Heart left ventricle (tissue), 16 donors: ENCODE measurements at regions of chr2 and their contacts with region 1.

Region 1: DNA sequence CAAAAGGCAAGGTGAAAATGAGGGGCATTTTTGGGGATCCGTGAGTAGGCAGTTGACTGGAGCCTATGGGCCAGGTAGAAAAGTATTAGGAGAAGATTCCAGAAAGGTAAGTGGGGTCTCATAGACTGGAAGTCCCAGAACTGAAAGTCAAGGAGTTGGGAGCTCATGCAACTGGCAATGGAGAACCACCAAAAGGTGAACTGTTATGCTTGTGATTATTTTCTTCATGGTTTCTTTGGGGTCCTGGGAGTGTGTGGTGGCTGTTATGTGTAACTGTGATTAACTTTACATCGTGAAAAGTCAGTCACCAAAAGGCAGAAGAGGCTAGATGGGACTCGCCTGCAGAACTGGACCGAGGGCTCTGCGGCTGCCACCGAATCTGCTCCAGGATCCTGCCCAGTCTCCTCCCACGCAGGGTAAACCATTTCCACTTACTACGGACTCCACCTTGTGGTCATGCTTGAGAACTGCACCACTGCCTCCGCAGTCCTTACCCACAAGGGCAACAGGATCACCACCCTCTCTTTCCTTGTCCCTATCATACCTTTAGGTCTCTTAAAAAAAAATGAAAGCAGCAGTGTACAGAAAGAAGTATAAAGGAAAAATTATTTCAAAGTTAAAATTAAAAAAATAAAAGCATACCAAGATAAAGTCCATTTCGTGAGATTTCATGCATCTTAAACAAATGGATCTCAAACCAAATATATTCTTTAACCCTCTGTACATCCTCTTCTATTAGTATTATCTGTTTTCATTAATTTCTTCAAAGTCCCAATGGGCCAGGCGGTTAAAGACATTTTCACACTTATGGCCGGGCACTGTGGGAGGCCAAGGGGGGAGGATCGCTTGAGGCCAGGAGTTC is 15.6 kb upstream of the CEP68 start:
- DNase-seq: peak; percentile 84 to 88 (median 87)
- ATAC-seq: peak; percentile 71 to 97 (median 96)
- H3K4me3 ChIP-seq: peak overlapping the region in 8 of 12 donors; percentile 4 to 34 (median 18)
- H3K27ac ChIP-seq: no peak overlapping the region
- H3K4me1 ChIP-seq: peaks cover 0 to 17% (median 4%) of the 10 kb centered on the region in 12 donors
- H3K27me3 ChIP-seq: no peaks in the 10 kb centered on the region
- CTCF ChIP-seq: peak; percentile 93 to 99 (median 96)
- POLR2A ChIP-seq: no peak

Region 2: DNA sequence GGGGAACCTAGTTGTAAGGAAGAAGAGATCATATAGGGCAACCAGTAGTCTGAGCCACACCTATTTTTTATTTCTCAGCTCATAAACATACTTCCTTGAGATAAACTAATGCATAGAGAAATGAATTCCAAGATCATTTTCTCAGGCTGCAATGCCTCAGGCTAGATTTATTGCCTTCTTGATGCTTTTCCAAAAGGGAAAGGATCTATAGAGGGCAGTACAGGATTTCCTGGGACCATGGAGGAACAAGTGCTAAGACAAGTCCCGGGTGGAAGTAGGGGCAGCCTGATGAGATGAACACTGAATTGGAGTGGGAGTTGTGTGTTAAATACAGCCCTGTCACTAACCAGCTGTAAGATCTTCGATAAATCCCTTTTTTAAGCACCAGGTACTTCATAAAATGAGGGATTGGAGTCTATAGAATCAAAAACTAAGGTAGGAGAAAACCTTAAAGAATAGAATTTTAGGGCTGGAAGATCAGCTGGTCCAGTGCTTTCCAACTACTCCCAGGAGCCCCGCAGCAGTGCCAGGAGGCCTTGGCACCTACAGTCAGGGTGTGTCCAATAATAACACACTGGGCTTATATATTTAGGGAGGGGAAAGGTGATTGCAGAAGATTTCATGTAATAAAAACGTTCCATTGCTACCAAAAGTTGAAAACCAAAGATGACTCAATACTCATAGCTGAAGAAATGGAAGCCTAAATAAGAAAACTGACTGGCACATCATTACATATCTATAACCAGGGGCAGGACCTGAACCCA is 445.1 kb before region 1 on chr2:
- intact Hi-C with region 1: loop called in 1 of 10 experiments (anchors 10 kb)
- DNase-seq: no peak
- ATAC-seq: peak in 1 of 4 donors; percentile 44
- H3K4me3 ChIP-seq: no peak overlapping the region
- H3K27ac ChIP-seq: no peak overlapping the region
- H3K4me1 ChIP-seq: peaks cover 0 to 25% (median 5%) of the 10 kb centered on the region in 12 donors
- H3K27me3 ChIP-seq: no peaks in the 10 kb centered on the region
- CTCF ChIP-seq: peak in 7 of 12 donors; percentile 8 to 45 (median 33)
- POLR2A ChIP-seq: no peak

Region 3: GRCh38 chr2:64978514-64979268 is 61.9 kb before region 1 on chr2:
- intact Hi-C with region 1: loop called in 2 of 10 experiments (anchors 5 to 10 kb)
- DNase-seq: no peak
- ATAC-seq: peak in 1 of 4 donors; percentile 41
- H3K4me3 ChIP-seq: no peak overlapping the region
- H3K27ac ChIP-seq: peak overlapping the region in 1 of 12 donors; percentile 0
- H3K4me1 ChIP-seq: peaks cover 0 to 35% (median 6%) of the 10 kb centered on the region in 12 donors
- H3K27me3 ChIP-seq: no peaks in the 10 kb centered on the region
- CTCF ChIP-seq: peak in 9 of 12 donors; percentile 12 to 44 (median 20)
- POLR2A ChIP-seq: no peak

Region 4: GRCh38 chr2:64988420-64989125 is 52.1 kb before region 1 on chr2:
- intact Hi-C with region 1: loop called in 6 of 10 experiments (anchors 2 to 10 kb)
- DNase-seq: peak in 4 of 5 donors; percentile 62 to 79 (median 73)
- ATAC-seq: peak; percentile 43 to 80 (median 78)
- H3K4me3 ChIP-seq: peak overlapping the region; percentile 71 to 97 (median 84)
- H3K27ac ChIP-seq: peak overlapping the region; percentile 87 to 99 (median 96)
- H3K4me1 ChIP-seq: peaks cover 0 to 45% (median 24%) of the 10 kb centered on the region in 12 donors
- H3K27me3 ChIP-seq: no peaks in the 10 kb centered on the region
- CTCF ChIP-seq: peak in 10 of 12 donors; percentile 36 to 70 (median 47)
- POLR2A ChIP-seq: peak in 1 of 2 donors; percentile 79

Region 5: DNA sequence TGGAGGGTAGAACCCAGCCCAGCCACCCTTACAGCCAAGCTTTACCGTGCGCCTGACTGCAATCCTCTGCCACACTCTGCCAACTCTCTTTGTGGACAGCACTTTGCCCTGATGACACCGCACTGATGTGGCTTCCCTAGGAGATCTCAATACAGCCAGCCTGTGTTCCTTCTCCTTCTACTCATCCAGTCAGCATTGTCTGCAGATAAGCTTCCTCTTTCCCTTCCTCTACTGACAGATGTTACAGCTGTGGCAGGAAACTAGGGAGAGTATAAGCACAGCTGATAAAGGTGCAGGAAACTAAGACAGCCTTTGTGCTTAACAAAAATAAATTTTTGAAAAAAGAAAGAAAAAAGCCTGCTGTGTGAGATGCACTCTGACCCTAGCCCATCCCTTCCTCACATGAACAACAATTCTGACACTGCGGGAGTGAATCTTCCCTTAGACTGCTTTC is 40.6 kb after region 1 on chr2:
- intact Hi-C with region 1: no loop called
- DNase-seq: peak in 1 of 5 donors; percentile 44
- ATAC-seq: peak; percentile 34 to 77 (median 64)
- H3K4me3 ChIP-seq: no peak overlapping the region
- H3K27ac ChIP-seq: peak overlapping the region in 7 of 12 donors; percentile 14 to 72 (median 36)
- H3K4me1 ChIP-seq: peaks cover 1 to 33% (median 20%) of the 10 kb centered on the region in 12 donors
- H3K27me3 ChIP-seq: no peaks in the 10 kb centered on the region
- CTCF ChIP-seq: no peak
- POLR2A ChIP-seq: no peak

Region 6: GRCh38 chr2:65576861-65577601 is 536.4 kb after region 1 on chr2:
- intact Hi-C with region 1: loop called in 1 of 10 experiments (anchors 5 kb)
- DNase-seq: no peak
- ATAC-seq: peak in 1 of 4 donors; percentile 54
- H3K4me3 ChIP-seq: no peak overlapping the region
- H3K27ac ChIP-seq: no peak overlapping the region
- H3K4me1 ChIP-seq: peaks cover 0 to 17% (median 4%) of the 10 kb centered on the region in 12 donors
- H3K27me3 ChIP-seq: no peaks in the 10 kb centered on the region
- CTCF ChIP-seq: no peak
- POLR2A ChIP-seq: no peak